Activated naive CD4-positive, alpha-beta T cell treated with anti-CD3 and anti-CD28 coated beads for 36 hours (primary cell): ENCODE measurements at regions of chr14 and their contacts with region 1.

Region 1: DNA sequence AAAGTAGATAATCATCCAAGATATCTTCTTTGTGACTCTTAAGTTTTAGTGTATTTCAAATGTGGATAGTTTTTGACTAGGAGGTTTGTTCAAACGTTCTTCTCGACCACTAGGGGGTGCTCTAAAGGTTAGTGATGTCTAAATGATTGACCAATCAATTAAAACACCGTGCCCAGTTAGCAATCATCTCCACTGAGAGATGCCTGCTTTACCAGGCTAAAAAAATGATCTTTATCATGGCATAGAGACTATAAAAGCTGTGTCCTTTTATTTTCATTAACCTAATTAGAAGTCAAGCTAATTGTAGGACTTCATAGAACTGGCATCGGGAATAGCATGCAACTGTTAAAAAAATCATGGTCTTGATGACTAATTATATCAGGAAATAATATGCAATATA is 153.9 kb downstream of the PRKCH start:
- DNase-seq: no peak
- H3K4me3 Mint-ChIP-seq: peak overlapping the region; percentile 38
- H3K27ac Mint-ChIP-seq: peak overlapping the region; percentile 100
- H3K4me1 Mint-ChIP-seq: peaks cover 88% of the 10 kb centered on the region
- H3K27me3 Mint-ChIP-seq: no peaks in the 10 kb centered on the region

Region 2: DNA sequence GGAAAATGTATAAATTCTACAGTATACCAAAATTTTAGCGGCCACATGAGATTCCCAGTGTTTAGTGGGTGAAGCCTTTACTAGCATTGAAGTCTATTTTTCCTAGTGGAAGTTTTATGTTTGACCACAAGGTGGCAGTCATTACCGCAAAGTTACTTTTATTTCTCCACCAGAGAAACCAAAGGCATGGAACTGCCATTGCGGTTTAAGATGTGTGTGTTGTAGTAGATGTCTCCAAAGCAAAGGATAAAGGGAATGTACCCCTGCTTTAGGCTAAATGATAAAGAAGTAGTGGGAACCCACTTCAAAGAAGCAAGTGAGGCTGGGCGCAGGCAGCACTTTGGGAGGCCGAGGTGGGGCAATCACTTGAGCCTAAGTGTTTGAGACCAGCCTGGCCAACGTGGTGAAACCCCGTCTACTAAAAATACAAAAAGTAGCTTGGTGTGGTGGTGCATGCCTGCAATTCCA is 13.5 kb before region 1 on chr14:
- CTCF ChIA-PET with region 1: interaction called, 33 read pairs
- intact Hi-C with region 1: loop called (anchors 2 kb)
- DNase-seq: peak; percentile 60
- H3K4me3 Mint-ChIP-seq: peak overlapping the region; percentile 27
- H3K27ac Mint-ChIP-seq: peak overlapping the region; percentile 93
- H3K4me1 Mint-ChIP-seq: peaks cover 71% of the 10 kb centered on the region
- H3K27me3 Mint-ChIP-seq: no peaks in the 10 kb centered on the region

Region 3: GRCh38 chr14:61525293-61526011 is 50.1 kb after region 1 on chr14:
- CTCF ChIA-PET with region 1: interaction called, 46 read pairs
- intact Hi-C with region 1: loop called (anchors 1 kb)
- DNase-seq: peak; percentile 91
- H3K4me3 Mint-ChIP-seq: peak overlapping the region; percentile 22
- H3K27ac Mint-ChIP-seq: peak overlapping the region; percentile 94
- H3K4me1 Mint-ChIP-seq: peaks cover 84% of the 10 kb centered on the region
- H3K27me3 Mint-ChIP-seq: no peaks in the 10 kb centered on the region

Region 4: DNA sequence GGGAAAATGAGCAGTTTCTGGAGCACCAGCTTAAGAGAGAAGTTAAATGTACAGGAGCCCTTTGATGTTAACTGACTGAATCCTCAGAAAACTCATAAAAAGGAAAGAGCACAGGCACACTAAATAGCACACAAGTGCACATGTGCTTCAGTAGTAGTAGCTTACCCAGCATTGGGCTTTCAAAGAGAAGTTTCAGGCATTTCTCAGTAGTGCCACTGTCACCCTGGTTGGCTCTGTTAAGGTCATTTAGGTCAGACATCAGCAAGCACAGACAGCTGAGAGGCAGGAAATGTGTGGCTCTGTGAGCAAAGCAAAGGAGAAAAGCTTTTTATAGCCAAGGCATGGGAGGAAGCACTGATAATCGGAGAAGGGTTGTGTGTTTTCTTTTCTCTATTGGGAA is 123.7 kb after region 1 on chr14:
- CTCF ChIA-PET with region 1: interaction called, 3 read pairs
- intact Hi-C with region 1: loop called (anchors 1 kb)
- DNase-seq: peak; percentile 66
- H3K4me3 Mint-ChIP-seq: peak overlapping the region; percentile 14
- H3K27ac Mint-ChIP-seq: peak overlapping the region; percentile 80
- H3K4me1 Mint-ChIP-seq: peaks cover 48% of the 10 kb centered on the region
- H3K27me3 Mint-ChIP-seq: no peaks in the 10 kb centered on the region

Region 5: GRCh38 chr14:61694830-61695694 is 219.7 kb after region 1 on chr14 and contains the start of gene HIF1A:
- CTCF ChIA-PET with region 1: interaction called, 11 read pairs
- intact Hi-C with region 1: loop called (anchors 1 kb)
- DNase-seq: peak; percentile 98
- H3K4me3 Mint-ChIP-seq: peak within 1 kb of the TSS; percentile 94
- H3K27ac Mint-ChIP-seq: peak within 1 kb of the TSS; percentile 93
- H3K4me1 Mint-ChIP-seq: peaks cover 44% of the 10 kb centered on the region
- H3K27me3 Mint-ChIP-seq: no peaks in the 10 kb centered on the region
- total RNA-seq, gene HIF1A: 398 to 417 TPM

Region 6: DNA sequence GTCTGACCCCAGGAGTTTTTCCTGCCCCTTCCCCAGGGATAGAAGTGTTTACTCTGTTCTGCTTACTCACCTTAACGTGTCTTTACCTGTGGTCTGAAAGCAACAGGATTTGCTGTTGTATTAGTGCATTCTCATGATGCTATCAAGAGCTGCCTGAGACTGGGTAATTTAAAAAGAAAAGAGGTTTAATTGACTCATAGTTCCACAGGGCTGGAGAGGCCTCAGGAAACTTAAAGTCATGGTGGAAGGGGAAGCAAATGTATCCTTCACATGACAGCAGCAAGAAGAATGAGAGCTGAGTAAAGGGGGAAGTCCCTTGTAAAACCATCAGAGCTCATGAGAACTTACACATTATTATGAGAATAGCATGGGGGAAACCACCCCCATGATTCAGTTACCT is 527.3 kb after region 1 on chr14:
- CTCF ChIA-PET with region 1: no interaction called
- intact Hi-C with region 1: loop called (anchors 5 kb)
- DNase-seq: peak; percentile 47
- H3K4me3 Mint-ChIP-seq: no peak overlapping the region
- H3K27ac Mint-ChIP-seq: no peak overlapping the region
- H3K4me1 Mint-ChIP-seq: peaks cover 13% of the 10 kb centered on the region
- H3K27me3 Mint-ChIP-seq: peaks cover 17% of the 10 kb centered on the region